Stomach (tissue), 19 donors: ENCODE measurements at regions of chr10 and their contacts with region 1.

Region 1: DNA sequence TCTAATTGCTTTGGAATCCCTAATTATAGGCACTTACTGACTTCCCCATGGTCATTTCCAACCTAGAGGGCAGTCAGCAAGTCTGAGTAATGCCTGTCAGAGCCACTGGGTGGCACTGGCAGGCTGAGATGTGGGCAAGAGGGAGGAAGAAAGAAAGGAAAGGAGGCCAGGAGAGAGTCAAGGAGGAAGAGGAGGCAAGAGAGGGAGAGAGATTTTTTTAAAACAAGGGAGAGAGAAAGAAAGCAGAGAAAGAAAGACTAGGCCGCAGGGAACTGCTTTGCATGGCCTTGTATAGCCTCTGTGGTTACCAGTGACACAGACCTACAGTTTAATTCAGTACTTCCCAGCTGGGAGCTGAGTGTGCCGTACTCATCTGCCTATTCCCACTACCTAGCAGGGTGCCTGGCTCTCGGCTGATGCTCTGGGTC is 210.4 kb upstream of the ADO start:
- DNase-seq: peak; percentile 66 to 82
- H3K4me3 ChIP-seq: no peak overlapping the region
- H3K27ac ChIP-seq: no peak overlapping the region
- H3K4me1 ChIP-seq: peaks cover 0 to 3% (median 0%) of the 10 kb centered on the region in 4 donors
- H3K27me3 ChIP-seq: no peaks in the 10 kb centered on the region
- CTCF ChIP-seq: peak in 5 of 7 experiments; percentile 77 to 95 (median 83)
- EP300 ChIP-seq: no peak
- POLR2A ChIP-seq: no peak

Region 2: GRCh38 chr10:62816331-62817120 is 222.4 kb after region 1 on chr10 and contains the start of gene EGR2:
- intact Hi-C with region 1: loop called (anchors 10 kb)
- DNase-seq: peak; percentile 94 to 98
- H3K4me3 ChIP-seq: peak within 1 kb of the TSS; percentile 66 to 89 (median 86)
- H3K27ac ChIP-seq: peak within 1 kb of the TSS; percentile 82 to 96 (median 95)
- H3K4me1 ChIP-seq: peaks cover 30 to 45% (median 39%) of the 10 kb centered on the region in 4 donors
- H3K27me3 ChIP-seq: peaks cover 8 to 68% (median 48%) of the 10 kb centered on the region in 3 donors
- CTCF ChIP-seq: peak in 1 of 7 experiments; percentile 16
- EP300 ChIP-seq: no peak
- POLR2A ChIP-seq: peak in 1 of 4 donors; percentile 19
- total RNA-seq, gene EGR2: 0.73 to 5.8 TPM in 2 of 5 donors, not detected in the others

Region 3: DNA sequence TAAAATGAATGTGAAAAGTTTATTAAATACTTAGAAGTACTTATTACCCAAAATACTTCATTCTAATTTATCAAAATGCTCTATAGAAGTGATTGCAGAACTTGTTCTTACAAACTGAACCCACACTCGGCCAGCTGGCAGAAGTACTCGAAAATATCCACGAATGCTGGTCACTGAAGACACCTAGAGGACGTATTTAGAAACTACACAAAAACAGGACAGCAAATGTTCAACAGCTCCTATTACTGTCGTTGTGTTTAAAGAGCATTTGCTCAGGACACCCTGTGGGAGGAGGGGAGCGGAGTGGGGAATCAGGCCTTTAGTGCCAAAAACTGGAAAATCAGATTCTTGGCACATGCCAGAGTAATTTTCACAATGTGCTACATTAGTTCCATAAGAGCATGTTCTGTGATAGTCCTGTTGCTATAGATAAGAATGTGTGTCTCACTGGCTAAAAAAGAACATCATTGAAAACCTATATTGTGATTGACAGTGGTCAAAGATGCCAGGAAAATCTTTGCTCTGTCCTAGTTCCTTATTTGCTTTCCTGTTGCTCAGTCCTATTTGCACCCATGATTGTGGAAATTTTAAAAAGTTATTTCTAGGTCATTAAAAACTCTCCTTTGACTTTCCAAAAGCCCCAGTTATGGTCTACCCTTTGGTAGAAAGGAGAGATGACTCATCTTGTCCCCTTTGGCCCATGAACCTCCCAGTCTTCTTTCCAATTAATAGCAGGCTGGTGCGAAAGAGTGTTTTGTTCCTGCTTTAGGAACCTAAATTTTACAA is 490.0 kb after region 1 on chr10:
- intact Hi-C with region 1: loop called (anchors 10 kb)
- DNase-seq: peak; percentile 62 to 90
- H3K4me3 ChIP-seq: no peak overlapping the region
- H3K27ac ChIP-seq: no peak overlapping the region
- H3K4me1 ChIP-seq: peaks cover 0 to 7% (median 2%) of the 10 kb centered on the region in 4 donors
- H3K27me3 ChIP-seq: no peaks in the 10 kb centered on the region
- CTCF ChIP-seq: peak in 5 of 7 experiments; percentile 36 to 68 (median 54)
- EP300 ChIP-seq: no peak
- POLR2A ChIP-seq: no peak